B cell (primary cell): ENCODE measurements at regions of chr13 and their contacts with region 1.

Region 1: GRCh38 chr13:50911937-50912795 is 2.6 kb downstream of the RNASEH2B start:
- DNase-seq: peak; percentile 92
- ATAC-seq: peak; percentile 56
- H3K4me3 ChIP-seq: peak overlapping the region; percentile 71 to 94 (median 87)
- H3K4me3 Mint-ChIP-seq: peak overlapping the region; percentile 95
- H3K27ac ChIP-seq: peak overlapping the region; percentile 95 to 98
- H3K27ac Mint-ChIP-seq: peak overlapping the region; percentile 97
- H3K4me1 ChIP-seq: peaks cover 56 to 59% of the 10 kb centered on the region in 2 donors
- H3K4me1 Mint-ChIP-seq: peaks cover 70% of the 10 kb centered on the region
- H3K27me3 ChIP-seq: no peaks in the 10 kb centered on the region
- H3K27me3 Mint-ChIP-seq: no peaks in the 10 kb centered on the region
- CTCF ChIP-seq: peak; percentile 89

Region 2: GRCh38 chr13:49495783-49496762 is 1416.1 kb before region 1 on chr13 and contains the start of gene PHF11:
- CTCF ChIA-PET with region 1: no interaction called
- POLR2A ChIA-PET with region 1: no interaction called
- intact Hi-C with region 1: loop called (anchors 10 kb)
- DNase-seq: peak; percentile 92
- ATAC-seq: peak; percentile 80
- H3K4me3 ChIP-seq: peak within 1 kb of the TSS; percentile 67 to 90 (median 77)
- H3K4me3 Mint-ChIP-seq: peak within 1 kb of the TSS; percentile 95
- H3K27ac ChIP-seq: peak within 1 kb of the TSS; percentile 89 to 95
- H3K27ac Mint-ChIP-seq: peak within 1 kb of the TSS; percentile 99
- H3K4me1 ChIP-seq: peaks cover 6 to 20% of the 10 kb centered on the region in 2 donors
- H3K4me1 Mint-ChIP-seq: peaks cover 40% of the 10 kb centered on the region
- H3K27me3 ChIP-seq: no peaks in the 10 kb centered on the region
- H3K27me3 Mint-ChIP-seq: no peaks in the 10 kb centered on the region
- CTCF ChIP-seq: no peak
- total RNA-seq, gene PHF11: 176 and 181 TPM in 2 replicates

Region 3: GRCh38 chr13:49976314-49977258 is 935.6 kb before region 1 on chr13:
- CTCF ChIA-PET with region 1: interaction called, 100 read pairs
- POLR2A ChIA-PET with region 1: interaction called, 4 read pairs
- intact Hi-C with region 1: loop called (anchors 1 kb)
- DNase-seq: peak; percentile 86
- ATAC-seq: peak; percentile 78
- H3K4me3 ChIP-seq: no peak overlapping the region
- H3K4me3 Mint-ChIP-seq: no peak overlapping the region
- H3K27ac ChIP-seq: no peak overlapping the region
- H3K27ac Mint-ChIP-seq: no peak overlapping the region
- H3K4me1 ChIP-seq: peaks cover 0 to 4% of the 10 kb centered on the region in 2 donors
- H3K4me1 Mint-ChIP-seq: peaks cover 4% of the 10 kb centered on the region
- H3K27me3 ChIP-seq: no peaks in the 10 kb centered on the region
- H3K27me3 Mint-ChIP-seq: no peaks in the 10 kb centered on the region
- CTCF ChIP-seq: peak; percentile 98

Region 4: GRCh38 chr13:50130123-50130946 is 781.8 kb before region 1 on chr13:
- CTCF ChIA-PET with region 1: interaction called, 33 read pairs
- POLR2A ChIA-PET with region 1: interaction called, 34 read pairs
- intact Hi-C with region 1: loop called (anchors 1 kb)
- DNase-seq: peak; percentile 71
- ATAC-seq: no peak
- H3K4me3 ChIP-seq: peak overlapping the region; percentile 43 to 87 (median 61)
- H3K4me3 Mint-ChIP-seq: peak overlapping the region; percentile 92
- H3K27ac ChIP-seq: no peak overlapping the region
- H3K27ac Mint-ChIP-seq: peak overlapping the region; percentile 86
- H3K4me1 ChIP-seq: peaks cover 72 to 73% of the 10 kb centered on the region in 2 donors
- H3K4me1 Mint-ChIP-seq: peaks cover 63% of the 10 kb centered on the region
- H3K27me3 ChIP-seq: peaks cover 2 to 68% (median 47%) of the 10 kb centered on the region in 4 experiments
- H3K27me3 Mint-ChIP-seq: peaks cover 35% of the 10 kb centered on the region
- CTCF ChIP-seq: no peak

Region 5: DNA sequence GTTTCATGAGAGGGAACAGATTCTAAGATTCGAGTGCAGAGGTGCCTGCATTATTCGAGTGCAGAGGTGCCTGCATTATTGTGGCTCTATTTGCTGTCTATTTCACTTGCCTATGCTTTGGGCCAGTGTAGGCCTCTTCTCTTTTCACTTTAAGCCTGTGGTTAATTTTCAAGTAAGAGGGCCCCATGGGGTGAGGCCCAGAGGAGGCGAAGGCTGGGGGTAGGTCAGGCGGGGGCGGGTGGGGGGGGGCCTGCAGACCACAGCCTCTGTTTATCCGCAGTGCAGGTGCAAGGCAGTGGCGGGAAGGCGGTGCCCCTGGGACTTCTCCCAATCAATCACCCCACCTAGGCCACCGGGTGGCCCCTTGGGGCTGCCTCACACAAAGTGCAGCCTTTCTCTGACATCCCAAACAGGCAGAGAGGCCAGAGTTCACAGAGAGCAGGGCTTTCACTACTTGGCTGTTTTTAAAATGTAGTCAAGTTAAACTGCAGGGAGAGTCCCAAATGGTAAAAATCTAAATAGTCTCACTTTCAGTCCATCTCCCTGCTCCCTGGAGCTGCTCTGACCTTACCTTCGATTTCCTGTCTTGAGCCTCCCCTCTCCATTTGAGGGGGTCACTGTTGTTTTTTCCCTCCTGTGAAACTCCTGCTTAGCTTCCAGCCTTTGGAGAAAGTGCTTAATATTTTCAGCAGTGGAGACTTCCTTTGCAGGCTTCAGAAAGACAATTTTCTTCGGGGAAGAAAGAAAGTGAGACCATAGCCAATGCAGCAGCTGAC is 317.7 kb before region 1 on chr13:
- CTCF ChIA-PET with region 1: interaction called, 8 read pairs
- POLR2A ChIA-PET with region 1: interaction called, 4 read pairs
- intact Hi-C with region 1: loop called (anchors 1 kb)
- DNase-seq: peak; percentile 83
- ATAC-seq: peak; percentile 89
- H3K4me3 ChIP-seq: peak overlapping the region in 2 of 5 experiments; percentile 10 to 35
- H3K4me3 Mint-ChIP-seq: peak overlapping the region; percentile 75
- H3K27ac ChIP-seq: peak overlapping the region; percentile 79 to 87
- H3K27ac Mint-ChIP-seq: peak overlapping the region; percentile 93
- H3K4me1 ChIP-seq: peaks cover 95 to 99% of the 10 kb centered on the region in 2 donors
- H3K4me1 Mint-ChIP-seq: peaks cover 85% of the 10 kb centered on the region
- H3K27me3 ChIP-seq: no peaks in the 10 kb centered on the region
- H3K27me3 Mint-ChIP-seq: no peaks in the 10 kb centered on the region
- CTCF ChIP-seq: no peak

Region 6: DNA sequence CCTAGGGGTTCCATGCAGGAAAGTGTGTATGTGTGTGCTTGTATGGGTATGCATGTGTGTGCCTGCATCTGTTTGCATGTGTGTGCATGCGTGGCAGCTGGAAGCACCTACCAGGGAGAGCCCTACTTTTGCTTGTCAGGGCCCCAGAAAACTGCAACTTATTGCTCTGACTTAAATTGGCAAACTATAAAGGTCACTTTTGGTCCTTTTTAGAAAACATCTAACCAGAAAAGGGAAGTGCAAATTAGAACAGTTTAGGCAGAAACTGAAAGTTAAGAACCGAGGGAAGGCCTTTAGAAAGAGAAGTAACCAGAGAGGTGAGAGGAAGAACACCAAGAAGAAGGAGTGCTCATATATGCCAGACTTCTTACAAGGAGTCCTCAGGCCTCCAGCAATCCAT is 101.2 kb before region 1 on chr13:
- CTCF ChIA-PET with region 1: interaction called, 23 read pairs
- POLR2A ChIA-PET with region 1: interaction called, 9 read pairs
- intact Hi-C with region 1: loop called (anchors 2 kb)
- DNase-seq: peak; percentile 76
- ATAC-seq: peak; percentile 94
- H3K4me3 ChIP-seq: peak overlapping the region in 1 of 5 experiments; percentile 32
- H3K4me3 Mint-ChIP-seq: peak overlapping the region; percentile 64
- H3K27ac ChIP-seq: peak overlapping the region; percentile 78 to 89
- H3K27ac Mint-ChIP-seq: peak overlapping the region; percentile 77
- H3K4me1 ChIP-seq: peaks cover 28 to 29% of the 10 kb centered on the region in 2 donors
- H3K4me1 Mint-ChIP-seq: peaks cover 40% of the 10 kb centered on the region
- H3K27me3 ChIP-seq: no peaks in the 10 kb centered on the region
- H3K27me3 Mint-ChIP-seq: no peaks in the 10 kb centered on the region
- CTCF ChIP-seq: no peak